Natural killer cell (primary cell): ENCODE measurements at regions of chr2 and their contacts with region 1.

Region 1: GRCh38 chr2:172102391-172103278 is at the start of gene DLX2:
- DNase-seq: peak; percentile 72 to 81
- ATAC-seq: peak; percentile 44 to 74 (median 66)
- H3K4me3 ChIP-seq: peak within 1 kb of the TSS; percentile 44
- H3K4me3 Mint-ChIP-seq: peak within 1 kb of the TSS; percentile 94
- H3K27ac ChIP-seq: no peak within 1 kb of the TSS
- H3K27ac Mint-ChIP-seq: peak within 1 kb of the TSS; percentile 78 to 92
- H3K4me1 ChIP-seq: peaks cover 73% of the 10 kb centered on the region
- H3K4me1 Mint-ChIP-seq: peaks cover 41 to 67% of the 10 kb centered on the region in 2 donors
- H3K27me3 ChIP-seq: peaks cover 89% of the 10 kb centered on the region
- H3K27me3 Mint-ChIP-seq: peaks cover 52 to 59% of the 10 kb centered on the region in 2 donors
- CTCF ChIP-seq: no peak
- total RNA-seq, gene DLX2: 0.55 to 0.84 (median 0.78) TPM

Region 2: GRCh38 chr2:170815746-170816503 is 1286.7 kb before region 1 on chr2:
- intact Hi-C with region 1: loop called (anchors 10 kb)
- DNase-seq: peak; percentile 40 to 81
- ATAC-seq: peak; percentile 54 to 64 (median 61)
- H3K4me3 ChIP-seq: peak overlapping the region; percentile 12
- H3K4me3 Mint-ChIP-seq: peak overlapping the region; percentile 82
- H3K27ac ChIP-seq: no peak overlapping the region
- H3K27ac Mint-ChIP-seq: no peak overlapping the region
- H3K4me1 ChIP-seq: peaks cover 52% of the 10 kb centered on the region
- H3K4me1 Mint-ChIP-seq: peaks cover 32 to 49% of the 10 kb centered on the region in 2 donors
- H3K27me3 ChIP-seq: peaks cover 70% of the 10 kb centered on the region
- H3K27me3 Mint-ChIP-seq: peaks cover 69 to 76% of the 10 kb centered on the region in 2 donors
- CTCF ChIP-seq: peak; percentile 68

Region 3: GRCh38 chr2:171703574-171704347 is 398.9 kb before region 1 on chr2:
- intact Hi-C with region 1: loop called (anchors 2 kb)
- DNase-seq: peak in 1 of 2 donors; percentile 64
- ATAC-seq: peak in 1 of 3 donors; percentile 41
- H3K4me3 ChIP-seq: no peak overlapping the region
- H3K4me3 Mint-ChIP-seq: no peak overlapping the region
- H3K27ac ChIP-seq: no peak overlapping the region
- H3K27ac Mint-ChIP-seq: no peak overlapping the region
- H3K4me1 ChIP-seq: no peaks in the 10 kb centered on the region
- H3K4me1 Mint-ChIP-seq: peaks cover 8 to 10% of the 10 kb centered on the region in 2 donors
- H3K27me3 ChIP-seq: no peaks in the 10 kb centered on the region
- H3K27me3 Mint-ChIP-seq: no peaks in the 10 kb centered on the region
- CTCF ChIP-seq: peak; percentile 37

Region 4: DNA sequence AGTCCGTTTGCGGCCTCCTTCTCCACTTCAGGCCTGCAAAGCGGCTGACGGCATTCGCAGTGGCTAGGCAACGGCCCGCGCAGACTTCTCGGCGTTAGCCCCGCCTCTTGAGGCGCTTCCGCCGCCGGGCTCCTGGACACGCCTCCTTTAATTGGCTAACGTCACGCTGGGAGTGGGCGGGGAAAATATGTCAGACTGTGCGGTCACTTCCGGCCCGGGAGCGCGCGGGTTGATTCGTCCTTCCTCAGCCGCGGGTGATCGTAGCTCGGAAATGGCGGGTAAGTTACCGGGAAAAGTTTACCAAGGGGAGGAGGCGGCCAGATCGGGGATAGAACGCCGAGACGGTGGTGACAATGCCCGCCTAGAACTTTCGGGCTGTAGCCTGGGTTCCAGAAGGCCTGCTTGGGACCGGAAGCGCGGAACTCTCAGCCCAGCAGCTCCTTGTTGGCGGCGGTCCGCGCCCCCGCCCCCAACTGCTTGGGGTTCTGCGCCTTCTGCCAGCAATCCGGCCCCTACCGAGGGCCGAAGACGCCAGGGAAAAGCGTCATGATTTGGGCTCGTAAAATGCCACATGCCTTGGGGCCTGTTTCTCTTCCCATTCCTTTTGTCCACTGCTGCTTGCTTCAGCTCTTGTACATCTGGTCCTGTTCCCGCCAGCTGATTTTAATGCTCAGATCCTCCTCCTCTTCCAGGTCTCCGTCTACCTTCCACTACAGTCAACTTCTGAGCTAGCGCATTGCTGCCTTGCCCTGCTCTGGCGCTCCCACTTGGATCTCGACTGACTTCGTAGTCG is 180.2 kb before region 1 on chr2 and contains the start of gene HAT1:
- intact Hi-C with region 1: loop called (anchors 10 kb)
- DNase-seq: peak; percentile 98 to 99
- ATAC-seq: peak; percentile 97 to 99 (median 98)
- H3K4me3 ChIP-seq: peak within 1 kb of the TSS; percentile 68
- H3K4me3 Mint-ChIP-seq: peak within 1 kb of the TSS; percentile 98
- H3K27ac ChIP-seq: peak within 1 kb of the TSS; percentile 91
- H3K27ac Mint-ChIP-seq: peak within 1 kb of the TSS; percentile 93 to 95
- H3K4me1 ChIP-seq: peaks cover 16% of the 10 kb centered on the region
- H3K4me1 Mint-ChIP-seq: peaks cover 30 to 34% of the 10 kb centered on the region in 2 donors
- H3K27me3 ChIP-seq: no peaks in the 10 kb centered on the region
- H3K27me3 Mint-ChIP-seq: peaks cover 0 to 2% of the 10 kb centered on the region in 2 donors
- CTCF ChIP-seq: no peak
- total RNA-seq, gene HAT1: 29.7 to 32.7 (median 32.2) TPM

Region 5: DNA sequence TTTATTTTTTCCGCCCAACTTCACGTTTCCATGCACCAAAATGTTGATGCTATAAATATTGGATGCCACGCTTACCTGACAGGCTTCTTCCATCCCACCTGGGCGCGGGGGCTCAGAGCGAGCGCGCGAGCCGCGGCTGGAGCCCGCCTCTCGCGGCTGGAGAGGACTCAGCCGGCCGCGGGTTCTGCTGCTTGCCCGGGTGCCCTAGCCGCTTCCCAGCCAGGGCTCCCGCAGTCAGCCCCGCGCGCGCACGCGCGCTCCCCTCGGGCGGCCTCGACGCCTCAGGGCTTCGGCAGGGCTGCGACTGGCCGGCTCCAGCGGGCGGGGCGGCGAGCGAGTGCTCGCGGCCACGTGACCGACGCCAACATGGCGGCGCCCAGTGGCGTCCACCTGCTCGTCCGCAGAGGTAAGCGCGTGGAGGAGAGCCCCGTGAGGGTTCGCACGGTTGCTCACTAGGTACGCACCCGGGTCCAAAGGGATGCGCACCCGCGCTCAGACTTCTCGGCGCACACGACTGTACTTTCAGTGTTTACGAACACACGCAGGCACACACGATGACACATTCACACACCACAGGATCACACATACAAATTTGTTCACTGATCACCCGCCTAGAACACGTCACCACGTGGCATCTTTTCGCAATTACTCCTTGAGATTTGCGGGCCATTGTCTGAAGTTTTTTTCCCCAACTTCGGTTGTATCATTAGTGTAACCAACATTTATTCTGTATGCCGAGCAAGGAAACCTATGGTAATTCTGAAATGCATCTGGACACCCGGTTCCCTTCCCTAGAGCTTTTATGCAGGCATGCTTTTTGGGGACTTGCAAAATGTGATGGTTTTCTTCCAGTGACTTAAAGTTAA is 102.8 kb before region 1 on chr2 and contains the start of gene METAP1D:
- intact Hi-C with region 1: loop called (anchors 5 kb)
- DNase-seq: peak; percentile 79 to 89
- ATAC-seq: peak; percentile 91 to 97 (median 96)
- H3K4me3 ChIP-seq: peak within 1 kb of the TSS; percentile 62
- H3K4me3 Mint-ChIP-seq: peak within 1 kb of the TSS; percentile 94
- H3K27ac ChIP-seq: no peak within 1 kb of the TSS
- H3K27ac Mint-ChIP-seq: peak within 1 kb of the TSS; percentile 65 to 86
- H3K4me1 ChIP-seq: peaks cover 7% of the 10 kb centered on the region
- H3K4me1 Mint-ChIP-seq: peaks cover 8 to 17% of the 10 kb centered on the region in 2 donors
- H3K27me3 ChIP-seq: no peaks in the 10 kb centered on the region
- H3K27me3 Mint-ChIP-seq: peaks cover 7 to 17% of the 10 kb centered on the region in 2 donors
- CTCF ChIP-seq: no peak
- total RNA-seq, gene METAP1D: 2.8 to 3.4 (median 3.2) TPM

Region 6: GRCh38 chr2:172079838-172080640 is 22.6 kb before region 1 on chr2:
- intact Hi-C with region 1: no loop called
- DNase-seq: peak in 1 of 2 donors; percentile 24
- ATAC-seq: peak in 1 of 3 donors; percentile 45
- H3K4me3 ChIP-seq: no peak overlapping the region
- H3K4me3 Mint-ChIP-seq: peak overlapping the region; percentile 13
- H3K27ac ChIP-seq: no peak overlapping the region
- H3K27ac Mint-ChIP-seq: peak overlapping the region in 1 of 2 donors; percentile 67
- H3K4me1 ChIP-seq: peaks cover 37% of the 10 kb centered on the region
- H3K4me1 Mint-ChIP-seq: peaks cover 33% of the 10 kb centered on the region in 2 donors
- H3K27me3 ChIP-seq: peaks cover 81% of the 10 kb centered on the region
- H3K27me3 Mint-ChIP-seq: peaks cover 67 to 94% of the 10 kb centered on the region in 2 donors
- CTCF ChIP-seq: no peak

Region 7: GRCh38 chr2:172465417-172466334 is 363.0 kb after region 1 on chr2:
- intact Hi-C with region 1: loop called (anchors 10 kb)
- DNase-seq: peak; percentile 40 to 88
- ATAC-seq: peak; percentile 68 to 80 (median 76)
- H3K4me3 ChIP-seq: no peak overlapping the region
- H3K4me3 Mint-ChIP-seq: peak overlapping the region; percentile 57
- H3K27ac ChIP-seq: no peak overlapping the region
- H3K27ac Mint-ChIP-seq: peak overlapping the region; percentile 64 to 74
- H3K4me1 ChIP-seq: peaks cover 40% of the 10 kb centered on the region
- H3K4me1 Mint-ChIP-seq: peaks cover 54% of the 10 kb centered on the region in 2 donors
- H3K27me3 ChIP-seq: no peaks in the 10 kb centered on the region
- H3K27me3 Mint-ChIP-seq: no peaks in the 10 kb centered on the region
- CTCF ChIP-seq: peak; percentile 87